Left colon (tissue), 2 donors: ENCODE measurements at regions of chr5 and their contacts with region 1.

Region 1: DNA sequence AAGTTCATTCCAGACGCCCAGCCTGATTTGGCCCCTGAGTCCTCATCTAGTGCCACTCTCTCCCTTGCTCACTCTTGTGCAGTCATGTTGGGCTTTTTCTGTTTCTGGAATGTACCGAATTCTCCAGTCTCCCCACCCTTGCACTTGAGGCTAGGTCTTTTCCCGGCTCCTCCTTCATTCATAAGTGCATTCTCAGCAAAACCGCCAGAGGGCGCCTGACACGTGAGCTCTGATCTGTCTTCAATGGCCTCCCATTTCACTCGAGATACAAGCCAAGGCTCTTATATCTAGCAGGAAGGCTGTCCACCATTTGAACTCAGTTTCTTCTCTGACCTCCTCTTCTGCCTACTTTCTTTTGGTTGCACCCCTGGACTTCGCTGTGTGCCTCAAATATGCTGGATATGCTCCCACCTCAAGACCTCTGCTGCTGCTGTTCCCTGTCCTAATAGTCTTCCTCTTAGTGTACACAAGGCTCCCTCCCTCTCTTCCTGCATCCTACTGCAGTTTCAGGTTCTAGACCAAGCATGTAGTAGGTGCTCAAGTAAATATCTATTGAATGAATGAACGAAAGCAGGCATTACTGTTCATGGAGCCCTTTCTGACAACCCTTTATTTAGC is 568.1 kb upstream of the WWC1 start:
- DNase-seq: peak; percentile 36 to 76
- ATAC-seq: peak; percentile 77

Region 2: GRCh38 chr5:168047043-168047668 is 323.8 kb after region 1 on chr5:
- intact Hi-C with region 1: loop called in 1 of 2 experiments (anchors 5 kb)
- DNase-seq: peak; percentile 43 to 57
- ATAC-seq: peak; percentile 99

Region 3: GRCh38 chr5:168219515-168220410 is 496.4 kb after region 1 on chr5:
- intact Hi-C with region 1: loop called in 1 of 2 experiments (anchors 2 kb)
- DNase-seq: peak in 1 of 2 donors; percentile 35
- ATAC-seq: peak; percentile 82